ENCODE measurements at regions of chr1 and their contacts with region 1.

Region 1: GRCh38 chr1:51044834-51045233 is 57.2 kb upstream of the C1orf185 start:
- DNase-seq: no peak
- ATAC-seq: peak in 1 of 4 donors; percentile 74
- H3K4me3 ChIP-seq: no peak overlapping the region
- H3K27ac ChIP-seq: no peak overlapping the region
- H3K4me1 ChIP-seq: no peaks in the 10 kb centered on the region
- H3K27me3 ChIP-seq: no peaks in the 10 kb centered on the region
- CTCF ChIP-seq: peak; percentile 55

Region 2: DNA sequence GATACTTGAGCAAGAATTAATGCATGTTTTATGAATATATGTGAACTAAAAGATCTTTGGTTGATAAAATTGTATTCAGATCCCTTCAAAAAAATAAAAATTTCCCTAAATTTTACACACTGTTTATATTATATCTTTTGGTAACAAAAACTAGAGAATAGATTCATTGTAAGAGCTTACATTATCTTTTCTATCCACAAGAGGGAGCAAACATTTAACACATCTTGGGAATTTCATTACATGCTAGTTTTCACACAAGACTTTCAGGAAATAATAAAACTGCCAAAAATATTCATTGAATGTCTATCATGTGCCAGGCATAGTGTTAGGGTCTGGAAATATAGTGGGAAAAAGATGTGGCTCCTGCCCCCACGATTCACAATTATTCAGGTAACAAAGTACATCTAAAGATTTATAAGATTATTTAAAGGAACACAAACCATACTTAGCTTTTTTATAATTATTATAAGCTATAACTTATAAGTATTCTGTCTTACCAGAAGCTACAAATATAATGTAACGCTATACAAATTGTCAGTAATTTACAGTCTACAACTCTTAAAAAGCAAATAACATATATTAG is 115.4 kb before region 1 on chr1:
- intact Hi-C with region 1: loop called (anchors 5 kb)
- DNase-seq: no peak
- ATAC-seq: peak in 1 of 4 donors; percentile 52
- H3K4me3 ChIP-seq: no peak overlapping the region
- H3K27ac ChIP-seq: no peak overlapping the region
- H3K4me1 ChIP-seq: no peaks in the 10 kb centered on the region
- H3K27me3 ChIP-seq: no peaks in the 10 kb centered on the region
- CTCF ChIP-seq: peak; percentile 59

Measured in psoas muscle (tissue), 8 donors.